ENCODE measurements at regions of chr3 and their contacts with region 1.

Region 1: DNA sequence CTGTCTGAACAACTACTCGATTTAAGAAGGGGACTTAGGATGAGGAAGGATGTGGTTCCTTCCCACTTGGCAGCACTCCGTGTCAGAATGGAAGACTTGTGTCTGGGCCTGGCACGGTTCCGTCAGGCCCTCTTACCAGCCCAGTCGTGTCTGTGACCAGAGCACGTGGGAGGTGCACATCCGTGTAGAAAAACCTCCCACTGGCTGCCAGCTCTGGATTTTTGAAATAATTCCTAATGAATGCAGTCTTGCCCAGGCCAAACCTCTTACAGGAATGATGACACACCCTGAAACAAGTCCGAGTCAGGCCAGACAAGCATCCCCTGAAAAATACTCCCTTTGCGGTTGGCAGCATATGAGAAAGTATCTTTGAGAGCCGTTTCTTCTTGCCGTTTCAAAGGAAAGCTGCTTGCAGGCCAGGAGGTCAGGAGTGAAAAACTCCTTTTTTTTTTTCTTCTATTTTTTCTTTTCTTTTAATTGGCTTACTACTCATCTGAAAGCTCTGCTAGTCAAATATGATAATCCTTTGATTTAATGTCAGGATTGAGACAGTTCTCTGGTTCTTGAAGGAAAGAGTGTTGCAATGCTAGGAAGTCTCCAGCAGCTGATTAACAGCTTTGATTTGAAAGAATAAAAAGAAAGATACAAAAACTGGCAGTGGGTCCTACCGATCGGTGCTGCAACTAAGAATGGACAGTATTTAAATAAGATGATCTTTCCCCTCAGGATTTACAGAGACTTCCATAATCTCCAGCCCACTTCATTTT is 19.8 kb downstream of the IL1RAP start:
- DNase-seq: peak; percentile 25
- H3K4me3 ChIP-seq: no peak overlapping the region
- H3K27ac ChIP-seq: peak overlapping the region; percentile 22 to 47 (median 30)
- H3K4me1 ChIP-seq: peaks cover 0 to 3% (median 0%) of the 10 kb centered on the region in 4 donors
- H3K27me3 ChIP-seq: no peaks in the 10 kb centered on the region
- CTCF ChIP-seq: no peak
- EP300 ChIP-seq: no peak
- POLR2A ChIP-seq: no peak

Region 2: DNA sequence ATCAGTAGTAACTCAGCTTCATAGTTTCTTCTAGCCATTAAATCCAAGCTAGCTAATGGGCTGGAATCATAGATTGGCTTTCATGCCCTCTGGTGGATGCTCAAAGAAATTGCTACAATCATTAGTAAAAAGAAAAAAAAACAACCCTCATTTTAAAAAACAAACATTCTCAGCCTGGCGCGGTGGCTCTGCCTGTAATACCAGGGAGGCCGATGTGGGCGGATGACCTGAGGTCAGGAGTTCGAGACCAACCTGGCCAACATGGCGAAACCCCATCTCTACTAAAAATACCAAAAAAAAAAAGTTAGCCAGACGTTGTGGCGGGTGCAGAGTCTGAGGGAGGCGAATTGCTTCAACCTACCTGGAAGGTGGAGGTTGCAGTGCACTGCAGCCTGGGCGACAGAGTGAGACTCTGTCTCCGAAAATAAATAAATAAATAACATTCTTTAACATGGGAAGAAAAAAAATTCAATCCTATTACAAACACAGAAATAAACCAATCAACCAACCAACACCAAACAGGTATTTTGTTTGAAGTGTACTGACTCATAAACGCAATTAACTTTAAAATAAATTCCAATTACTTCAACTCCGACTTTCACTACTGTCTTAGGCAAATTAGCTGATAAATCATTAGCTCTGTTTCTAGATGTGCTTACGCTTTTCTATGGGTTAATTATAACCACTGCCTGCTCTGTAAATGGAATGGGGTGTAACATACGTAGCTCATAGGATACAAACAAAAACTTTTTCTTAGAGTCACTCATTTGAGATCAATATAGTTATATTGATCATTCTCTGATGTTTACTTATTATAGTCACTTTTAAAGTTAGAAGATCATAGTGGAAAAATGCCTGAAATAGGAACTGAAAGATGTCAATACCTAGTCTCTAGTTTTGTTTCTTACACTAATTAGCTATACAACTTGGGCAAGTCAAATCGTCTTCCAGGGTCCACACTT is 108.9 kb before region 1 on chr3:
- in situ Hi-C with region 1: loop called in 1 of 4 experiments (anchors 25 kb)
- intact Hi-C with region 1: no loop called
- DNase-seq: peak; percentile 16
- H3K4me3 ChIP-seq: no peak overlapping the region
- H3K27ac ChIP-seq: no peak overlapping the region
- H3K4me1 ChIP-seq: peaks cover 0 to 4% (median 0%) of the 10 kb centered on the region in 4 donors
- H3K27me3 ChIP-seq: no peaks in the 10 kb centered on the region
- CTCF ChIP-seq: peak; percentile 45 to 57 (median 54)
- EP300 ChIP-seq: no peak
- POLR2A ChIP-seq: no peak

Measured in transverse colon (tissue), 4 donors.